ENCODE measurements at regions of chr18 and their contacts with region 1.

Region 1: GRCh38 chr18:73733806-73734314 is 413.8 kb downstream of the FBXO15 start:
- DNase-seq: peak in 2 of 10 donors; percentile 35 to 38
- H3K4me3 ChIP-seq: no peak overlapping the region
- H3K27ac ChIP-seq: peak overlapping the region in 43 of 59 donors; percentile 6 to 87 (median 67)
- H3K27me3 ChIP-seq: no peaks in the 10 kb centered on the region
- CTCF ChIP-seq: no peak

Region 2: DNA sequence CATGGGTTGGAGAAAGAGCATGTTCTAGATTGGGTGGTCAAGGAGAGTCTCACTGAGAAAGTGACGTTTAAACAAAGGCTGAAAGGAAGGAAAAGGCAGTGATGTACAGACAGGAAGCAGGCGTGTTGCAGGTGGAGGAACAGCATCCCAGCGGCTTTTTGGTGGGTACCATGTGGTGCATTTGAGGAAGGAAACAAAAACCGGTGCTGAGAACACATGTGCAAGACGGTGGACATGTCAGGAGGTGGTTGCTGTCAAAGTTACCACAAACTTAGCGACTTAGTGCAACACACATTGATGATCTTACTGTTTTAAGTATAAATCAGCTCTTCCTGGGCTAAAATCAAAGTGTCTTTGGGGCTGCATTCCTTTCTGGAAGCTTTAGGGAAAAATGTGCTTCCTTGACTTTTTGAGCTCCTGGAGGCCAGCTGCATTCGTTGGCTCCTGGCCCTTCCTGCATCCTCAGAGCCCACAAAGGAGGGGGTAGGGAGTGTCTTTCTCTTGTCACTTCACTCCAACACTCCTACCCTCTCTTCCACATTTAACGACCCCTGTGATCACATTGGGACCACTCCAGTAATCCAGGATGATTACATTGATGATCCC is 33.2 kb after region 1 on chr18:
- intact Hi-C with region 1: no loop called
- DNase-seq: no peak
- H3K4me3 ChIP-seq: no peak overlapping the region
- H3K27ac ChIP-seq: no peak overlapping the region
- H3K27me3 ChIP-seq: no peaks in the 10 kb centered on the region
- CTCF ChIP-seq: no peak

Region 3: GRCh38 chr18:73947180-73947921 is 213.5 kb after region 1 on chr18:
- intact Hi-C with region 1: loop called in 1 of 2 experiments (anchors 2 kb)
- DNase-seq: peak in 2 of 10 donors; percentile 50 to 56
- H3K4me3 ChIP-seq: peak overlapping the region in 9 of 59 donors; percentile 0 to 40 (median 34)
- H3K27ac ChIP-seq: peak overlapping the region in 55 of 59 donors; percentile 11 to 90 (median 73)
- H3K27me3 ChIP-seq: no peaks in the 10 kb centered on the region
- CTCF ChIP-seq: no peak